ENCODE measurements at regions of chr7 and their contacts with region 1.

Region 1: DNA sequence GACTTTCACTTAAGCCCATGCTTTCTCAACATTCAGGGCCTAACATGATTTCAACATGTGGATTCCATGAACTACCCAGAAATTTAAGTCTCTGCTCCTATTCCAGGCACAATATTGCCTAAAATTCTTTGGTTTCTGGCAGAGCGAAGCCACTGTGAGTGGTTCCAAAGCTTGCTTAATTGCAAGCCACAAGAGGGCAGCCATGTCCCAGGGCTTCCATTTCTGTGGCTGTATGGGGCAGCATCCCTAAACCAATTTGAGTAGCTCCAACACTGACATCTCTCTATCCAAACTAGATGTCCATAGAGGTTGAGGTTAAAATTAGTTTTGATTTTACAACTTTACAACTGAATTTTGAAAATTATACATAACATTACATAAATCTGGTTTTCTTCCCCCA is 56.3 kb upstream of the MDFIC start:
- DNase-seq: peak; percentile 12 to 60 (median 42)
- ATAC-seq: peak; percentile 81
- H3K4me3 ChIP-seq: no peak overlapping the region
- H3K4me3 Mint-ChIP-seq: no peak overlapping the region
- H3K27ac ChIP-seq: no peak overlapping the region
- H3K27ac Mint-ChIP-seq: no peak overlapping the region
- H3K4me1 ChIP-seq: no peaks in the 10 kb centered on the region
- H3K4me1 Mint-ChIP-seq: peaks cover 0 to 6% (median 0%) of the 10 kb centered on the region in 7 donors
- H3K27me3 ChIP-seq: no peaks in the 10 kb centered on the region
- H3K27me3 Mint-ChIP-seq: no peaks in the 10 kb centered on the region

Region 2: GRCh38 chr7:114806590-114807162 is 58.9 kb before region 1 on chr7:
- CTCF ChIA-PET with region 1: no interaction called
- POLR2A ChIA-PET with region 1: no interaction called
- intact Hi-C with region 1: no loop called
- DNase-seq: no peak
- ATAC-seq: no peak
- H3K4me3 ChIP-seq: no peak overlapping the region
- H3K4me3 Mint-ChIP-seq: no peak overlapping the region
- H3K27ac ChIP-seq: no peak overlapping the region
- H3K27ac Mint-ChIP-seq: no peak overlapping the region
- H3K4me1 ChIP-seq: no peaks in the 10 kb centered on the region
- H3K4me1 Mint-ChIP-seq: peaks cover 0 to 5% (median 0%) of the 10 kb centered on the region in 7 donors
- H3K27me3 ChIP-seq: no peaks in the 10 kb centered on the region
- H3K27me3 Mint-ChIP-seq: peaks cover 0 to 5% (median 0%) of the 10 kb centered on the region in 5 donors

Region 3: GRCh38 chr7:114997487-114998404 is 132.2 kb after region 1 on chr7:
- CTCF ChIA-PET with region 1: no interaction called
- POLR2A ChIA-PET with region 1: no interaction called
- intact Hi-C with region 1: loop called in 1 of 2 experiments (anchors 5 kb)
- DNase-seq: no peak
- ATAC-seq: no peak
- H3K4me3 ChIP-seq: no peak overlapping the region
- H3K4me3 Mint-ChIP-seq: peak overlapping the region in 6 of 10 donors; percentile 1 to 58 (median 35)
- H3K27ac ChIP-seq: no peak overlapping the region
- H3K27ac Mint-ChIP-seq: peak overlapping the region in 8 of 9 donors; percentile 12 to 77 (median 61)
- H3K4me1 ChIP-seq: peaks cover 10 to 17% of the 10 kb centered on the region in 2 donors
- H3K4me1 Mint-ChIP-seq: peaks cover 31 to 83% (median 67%) of the 10 kb centered on the region in 7 donors
- H3K27me3 ChIP-seq: no peaks in the 10 kb centered on the region
- H3K27me3 Mint-ChIP-seq: no peaks in the 10 kb centered on the region

Region 4: DNA sequence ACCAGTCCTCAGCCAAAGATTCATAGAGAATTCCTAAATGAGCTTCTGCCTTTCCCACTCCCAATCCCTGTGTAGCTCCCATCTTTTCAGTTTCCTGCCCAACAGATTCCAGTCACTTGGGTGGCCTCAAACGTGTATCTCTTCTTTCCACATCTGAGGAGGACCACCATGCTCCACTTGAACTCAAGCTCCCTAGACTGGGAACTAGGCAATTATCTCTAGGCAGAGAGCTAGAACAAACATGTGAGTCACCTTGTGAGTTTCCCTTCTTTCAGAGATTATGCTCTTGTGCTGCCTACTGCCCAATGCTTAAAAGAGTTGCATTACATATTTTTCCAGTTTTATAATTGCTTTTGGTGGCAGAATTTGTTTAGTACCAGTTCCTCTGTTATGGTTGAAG is 234.3 kb after region 1 on chr7:
- CTCF ChIA-PET with region 1: no interaction called
- POLR2A ChIA-PET with region 1: no interaction called
- intact Hi-C with region 1: no loop called
- DNase-seq: no peak
- ATAC-seq: no peak
- H3K4me3 ChIP-seq: no peak overlapping the region
- H3K4me3 Mint-ChIP-seq: no peak overlapping the region
- H3K27ac ChIP-seq: no peak overlapping the region
- H3K27ac Mint-ChIP-seq: no peak overlapping the region
- H3K4me1 ChIP-seq: no peaks in the 10 kb centered on the region
- H3K4me1 Mint-ChIP-seq: peaks cover 0 to 5% (median 0%) of the 10 kb centered on the region in 7 donors
- H3K27me3 ChIP-seq: no peaks in the 10 kb centered on the region
- H3K27me3 Mint-ChIP-seq: peaks cover 0 to 5% (median 0%) of the 10 kb centered on the region in 5 donors

Region 5: DNA sequence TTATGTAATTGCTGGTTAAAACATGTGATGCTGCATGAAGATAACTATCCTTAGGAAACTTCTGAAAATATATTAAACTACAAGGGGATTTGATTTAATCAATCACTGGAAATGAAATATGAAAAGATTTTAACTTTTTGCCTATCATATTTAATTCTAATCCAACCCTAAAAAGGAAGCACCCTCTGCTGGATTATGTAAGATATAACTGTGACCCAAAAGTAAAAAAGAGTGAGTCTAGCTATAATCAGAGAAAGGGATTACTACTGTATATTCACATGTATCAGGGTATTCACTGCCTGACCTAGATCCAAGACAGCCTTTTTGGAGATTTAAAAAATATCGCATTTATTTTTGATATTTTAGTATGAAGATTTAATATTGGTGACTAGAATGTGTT is 351.8 kb after region 1 on chr7:
- CTCF ChIA-PET with region 1: interaction called, 80 read pairs
- POLR2A ChIA-PET with region 1: no interaction called
- intact Hi-C with region 1: loop called (anchors 1 kb)
- DNase-seq: peak in 1 of 9 donors; percentile 21
- ATAC-seq: peak; percentile 41
- H3K4me3 ChIP-seq: no peak overlapping the region
- H3K4me3 Mint-ChIP-seq: no peak overlapping the region
- H3K27ac ChIP-seq: no peak overlapping the region
- H3K27ac Mint-ChIP-seq: no peak overlapping the region
- H3K4me1 ChIP-seq: peaks cover 0 to 11% of the 10 kb centered on the region in 2 donors
- H3K4me1 Mint-ChIP-seq: peaks cover 0 to 11% (median 5%) of the 10 kb centered on the region in 7 donors
- H3K27me3 ChIP-seq: no peaks in the 10 kb centered on the region
- H3K27me3 Mint-ChIP-seq: peaks cover 0 to 10% (median 0%) of the 10 kb centered on the region in 5 donors

Region 6: GRCh38 chr7:115475761-115476385 is 610.3 kb after region 1 on chr7:
- CTCF ChIA-PET with region 1: no interaction called
- POLR2A ChIA-PET with region 1: no interaction called
- intact Hi-C with region 1: loop called (anchors 1 to 2 kb)
- DNase-seq: no peak
- ATAC-seq: peak; percentile 46
- H3K4me3 ChIP-seq: no peak overlapping the region
- H3K4me3 Mint-ChIP-seq: peak overlapping the region in 2 of 10 donors; percentile 28 to 29
- H3K27ac ChIP-seq: no peak overlapping the region
- H3K27ac Mint-ChIP-seq: no peak overlapping the region
- H3K4me1 ChIP-seq: no peaks in the 10 kb centered on the region
- H3K4me1 Mint-ChIP-seq: peaks cover 0 to 14% (median 10%) of the 10 kb centered on the region in 7 donors
- H3K27me3 ChIP-seq: no peaks in the 10 kb centered on the region
- H3K27me3 Mint-ChIP-seq: peaks cover 34 to 55% (median 43%) of the 10 kb centered on the region in 5 donors

Region 7: DNA sequence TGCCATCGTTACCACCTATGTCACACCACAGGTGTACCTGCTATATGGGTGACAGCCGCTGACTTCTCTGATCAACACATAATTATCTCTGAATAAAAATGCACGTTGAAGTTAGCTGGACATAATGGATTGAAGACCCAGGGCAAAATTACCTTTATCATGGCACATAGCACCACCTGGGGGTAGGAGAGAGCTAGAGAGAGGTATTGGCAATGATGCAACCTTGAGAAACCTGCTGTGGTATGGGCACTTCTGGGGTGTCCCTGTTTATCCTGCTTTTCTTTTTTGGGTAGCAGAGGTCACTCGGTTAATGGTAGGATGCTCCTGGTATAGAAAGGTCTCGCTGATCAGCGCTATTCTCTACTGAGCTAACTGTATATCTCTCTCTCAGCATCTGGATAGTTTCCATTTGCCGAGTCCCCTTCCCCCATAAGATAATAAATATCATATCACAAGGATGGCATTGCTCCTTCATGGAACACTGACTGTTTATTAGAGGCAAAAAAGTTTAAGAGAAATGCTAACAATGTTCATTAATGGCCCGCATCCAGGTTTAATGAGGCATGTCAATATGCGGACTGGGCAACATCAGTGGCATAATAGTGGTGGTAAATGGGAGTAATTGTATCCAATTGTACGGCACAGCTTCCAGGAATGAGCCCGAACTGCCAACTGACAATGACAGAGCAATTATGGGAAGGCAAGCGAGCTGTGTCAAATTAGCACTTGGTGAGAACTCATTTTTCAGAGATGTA is 841.9 kb after region 1 on chr7:
- CTCF ChIA-PET with region 1: no interaction called
- POLR2A ChIA-PET with region 1: no interaction called
- intact Hi-C with region 1: loop called in 1 of 2 experiments (anchors 2 kb)
- DNase-seq: no peak
- ATAC-seq: no peak
- H3K4me3 ChIP-seq: no peak overlapping the region
- H3K4me3 Mint-ChIP-seq: no peak overlapping the region
- H3K27ac ChIP-seq: no peak overlapping the region
- H3K27ac Mint-ChIP-seq: no peak overlapping the region
- H3K4me1 ChIP-seq: no peaks in the 10 kb centered on the region
- H3K4me1 Mint-ChIP-seq: no peaks in the 10 kb centered on the region
- H3K27me3 ChIP-seq: no peaks in the 10 kb centered on the region
- H3K27me3 Mint-ChIP-seq: no peaks in the 10 kb centered on the region

Region 8: DNA sequence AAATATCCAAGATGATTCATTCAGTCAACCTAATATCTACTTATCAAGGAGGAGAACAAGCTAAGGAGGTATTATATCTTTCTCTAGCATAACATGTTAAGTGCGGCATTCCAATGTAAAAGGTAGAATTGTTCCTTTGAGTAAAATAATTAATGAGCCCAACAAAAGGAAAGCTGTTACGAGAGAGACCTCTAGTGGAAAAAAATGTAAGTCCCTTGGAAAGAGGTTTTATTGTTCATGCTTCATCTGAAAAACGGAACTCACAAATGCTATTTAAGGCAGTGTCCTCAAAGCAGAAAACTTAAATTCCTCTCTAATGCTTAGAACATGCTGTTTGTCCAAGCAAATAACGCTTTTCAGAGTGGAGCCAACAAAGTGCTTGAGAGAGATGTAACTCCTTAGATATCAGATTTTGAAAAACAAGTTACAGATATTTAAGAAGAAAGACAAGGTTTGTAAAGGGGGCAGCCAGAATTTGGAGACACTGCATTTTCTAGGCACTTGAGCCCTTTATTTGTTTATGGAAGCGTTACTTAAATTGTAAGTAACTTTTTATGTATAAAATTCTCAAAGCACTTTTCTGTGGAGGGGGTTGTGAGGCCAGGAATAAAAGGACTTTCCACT is 1045.1 kb after region 1 on chr7:
- CTCF ChIA-PET with region 1: no interaction called
- POLR2A ChIA-PET with region 1: no interaction called
- intact Hi-C with region 1: loop called in 1 of 2 experiments (anchors 5 kb)
- DNase-seq: peak in 2 of 9 donors; percentile 2 to 3
- ATAC-seq: no peak
- H3K4me3 ChIP-seq: no peak overlapping the region
- H3K4me3 Mint-ChIP-seq: no peak overlapping the region
- H3K27ac ChIP-seq: no peak overlapping the region
- H3K27ac Mint-ChIP-seq: no peak overlapping the region
- H3K4me1 ChIP-seq: no peaks in the 10 kb centered on the region
- H3K4me1 Mint-ChIP-seq: no peaks in the 10 kb centered on the region
- H3K27me3 ChIP-seq: no peaks in the 10 kb centered on the region
- H3K27me3 Mint-ChIP-seq: peaks cover 0 to 11% (median 3%) of the 10 kb centered on the region in 5 donors